ENCODE measurements at regions of chr12 and their contacts with region 1.

Region 1: GRCh38 chr12:84874125-84874824 is 38.3 kb downstream of the SLC6A15 start:
- DNase-seq: peak in 4 of 5 donors; percentile 20 to 34 (median 24)
- H3K4me3 ChIP-seq: no peak overlapping the region
- H3K4me3 Mint-ChIP-seq: no peak overlapping the region
- H3K27ac ChIP-seq: no peak overlapping the region
- H3K27ac Mint-ChIP-seq: no peak overlapping the region
- H3K4me1 ChIP-seq: no peaks in the 10 kb centered on the region
- H3K4me1 Mint-ChIP-seq: no peaks in the 10 kb centered on the region
- H3K27me3 ChIP-seq: no peaks in the 10 kb centered on the region
- H3K27me3 Mint-ChIP-seq: peaks cover 0 to 2% of the 10 kb centered on the region in 2 donors

Region 2: GRCh38 chr12:84807249-84807648 is 67.0 kb before region 1 on chr12:
- CTCF ChIA-PET with region 1: no interaction called
- POLR2A ChIA-PET with region 1: no interaction called
- intact Hi-C with region 1: no loop called
- DNase-seq: no peak
- H3K4me3 ChIP-seq: no peak overlapping the region
- H3K4me3 Mint-ChIP-seq: no peak overlapping the region
- H3K27ac ChIP-seq: no peak overlapping the region
- H3K27ac Mint-ChIP-seq: no peak overlapping the region
- H3K4me1 ChIP-seq: no peaks in the 10 kb centered on the region
- H3K4me1 Mint-ChIP-seq: no peaks in the 10 kb centered on the region
- H3K27me3 ChIP-seq: no peaks in the 10 kb centered on the region
- H3K27me3 Mint-ChIP-seq: no peaks in the 10 kb centered on the region

Region 3: GRCh38 chr12:84862186-84862585 is 12.1 kb before region 1 on chr12:
- CTCF ChIA-PET with region 1: interaction called, 14 read pairs
- POLR2A ChIA-PET with region 1: no interaction called
- intact Hi-C with region 1: no loop called
- DNase-seq: no peak
- H3K4me3 ChIP-seq: no peak overlapping the region
- H3K4me3 Mint-ChIP-seq: no peak overlapping the region
- H3K27ac ChIP-seq: no peak overlapping the region
- H3K27ac Mint-ChIP-seq: no peak overlapping the region
- H3K4me1 ChIP-seq: no peaks in the 10 kb centered on the region
- H3K4me1 Mint-ChIP-seq: no peaks in the 10 kb centered on the region
- H3K27me3 ChIP-seq: no peaks in the 10 kb centered on the region
- H3K27me3 Mint-ChIP-seq: peaks cover 0 to 1% of the 10 kb centered on the region in 2 donors

Region 4: DNA sequence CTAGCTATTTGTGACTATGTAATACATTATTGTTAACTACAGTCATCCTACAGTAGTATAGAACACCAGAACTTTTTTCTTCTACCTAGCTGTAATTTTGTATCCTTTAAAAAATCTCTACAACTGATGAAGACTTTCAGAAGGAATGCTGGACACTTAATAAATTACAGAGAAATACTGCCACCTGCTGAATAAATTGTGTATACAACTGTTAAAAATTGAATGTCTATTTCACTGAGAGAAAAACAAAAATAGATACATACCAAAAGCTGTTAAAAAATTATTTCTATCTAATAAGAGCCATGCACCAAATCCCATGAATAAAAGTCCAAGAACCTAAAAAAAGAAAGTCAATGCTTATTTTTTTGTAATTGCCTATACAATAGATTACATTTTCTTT is 155.2 kb after region 1 on chr12:
- CTCF ChIA-PET with region 1: interaction called, 5 read pairs
- POLR2A ChIA-PET with region 1: no interaction called
- intact Hi-C with region 1: loop called (anchors 1 kb)
- DNase-seq: peak in 1 of 5 donors; percentile 4
- H3K4me3 ChIP-seq: no peak overlapping the region
- H3K4me3 Mint-ChIP-seq: no peak overlapping the region
- H3K27ac ChIP-seq: no peak overlapping the region
- H3K27ac Mint-ChIP-seq: no peak overlapping the region
- H3K4me1 ChIP-seq: no peaks in the 10 kb centered on the region
- H3K4me1 Mint-ChIP-seq: no peaks in the 10 kb centered on the region
- H3K27me3 ChIP-seq: no peaks in the 10 kb centered on the region
- H3K27me3 Mint-ChIP-seq: peaks cover 0 to 1% of the 10 kb centered on the region in 2 donors

Region 5: DNA sequence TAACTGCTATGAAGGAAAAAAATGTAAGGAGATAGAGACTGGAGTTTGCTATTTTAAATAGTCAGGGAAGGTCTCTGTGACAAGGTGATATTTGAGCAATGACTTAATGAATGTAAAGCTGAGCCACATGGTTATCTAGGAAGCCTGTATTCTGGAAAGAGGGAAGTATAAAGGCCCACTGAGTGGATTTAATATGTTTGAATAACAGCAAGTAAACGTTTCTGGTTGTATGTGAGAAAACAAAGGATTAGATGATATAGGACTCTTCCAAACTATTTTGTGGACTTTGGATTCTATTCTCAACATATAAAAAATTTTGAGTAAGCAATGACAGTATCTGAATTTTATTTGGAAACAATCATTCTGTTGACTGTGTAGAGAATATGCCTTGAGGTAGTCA is 167.1 kb after region 1 on chr12:
- CTCF ChIA-PET with region 1: no interaction called
- POLR2A ChIA-PET with region 1: no interaction called
- intact Hi-C with region 1: no loop called
- DNase-seq: no peak
- H3K4me3 ChIP-seq: no peak overlapping the region
- H3K4me3 Mint-ChIP-seq: no peak overlapping the region
- H3K27ac ChIP-seq: no peak overlapping the region
- H3K27ac Mint-ChIP-seq: no peak overlapping the region
- H3K4me1 ChIP-seq: no peaks in the 10 kb centered on the region
- H3K4me1 Mint-ChIP-seq: peaks cover 0 to 3% (median 0%) of the 10 kb centered on the region in 4 donors
- H3K27me3 ChIP-seq: no peaks in the 10 kb centered on the region
- H3K27me3 Mint-ChIP-seq: peaks cover 0 to 1% of the 10 kb centered on the region in 2 donors

Region 6: GRCh38 chr12:85057370-85057963 is 183.2 kb after region 1 on chr12:
- CTCF ChIA-PET with region 1: interaction called, 4 read pairs
- POLR2A ChIA-PET with region 1: no interaction called
- intact Hi-C with region 1: loop called (anchors 1 kb)
- DNase-seq: peak in 2 of 5 donors; percentile 6 to 11
- H3K4me3 ChIP-seq: no peak overlapping the region
- H3K4me3 Mint-ChIP-seq: no peak overlapping the region
- H3K27ac ChIP-seq: no peak overlapping the region
- H3K27ac Mint-ChIP-seq: no peak overlapping the region
- H3K4me1 ChIP-seq: no peaks in the 10 kb centered on the region
- H3K4me1 Mint-ChIP-seq: no peaks in the 10 kb centered on the region
- H3K27me3 ChIP-seq: no peaks in the 10 kb centered on the region
- H3K27me3 Mint-ChIP-seq: peaks cover 0 to 2% of the 10 kb centered on the region in 2 donors

Region 7: GRCh38 chr12:85872497-85873091 is 998.3 kb after region 1 on chr12:
- CTCF ChIA-PET with region 1: no interaction called
- POLR2A ChIA-PET with region 1: no interaction called
- intact Hi-C with region 1: loop called (anchors 2 kb)
- DNase-seq: peak in 1 of 5 donors; percentile 6
- H3K4me3 ChIP-seq: no peak overlapping the region
- H3K4me3 Mint-ChIP-seq: no peak overlapping the region
- H3K27ac ChIP-seq: no peak overlapping the region
- H3K27ac Mint-ChIP-seq: no peak overlapping the region
- H3K4me1 ChIP-seq: no peaks in the 10 kb centered on the region
- H3K4me1 Mint-ChIP-seq: no peaks in the 10 kb centered on the region
- H3K27me3 ChIP-seq: no peaks in the 10 kb centered on the region
- H3K27me3 Mint-ChIP-seq: no peaks in the 10 kb centered on the region